ENCODE measurements at regions of chr5 and their contacts with region 1.

Region 1: DNA sequence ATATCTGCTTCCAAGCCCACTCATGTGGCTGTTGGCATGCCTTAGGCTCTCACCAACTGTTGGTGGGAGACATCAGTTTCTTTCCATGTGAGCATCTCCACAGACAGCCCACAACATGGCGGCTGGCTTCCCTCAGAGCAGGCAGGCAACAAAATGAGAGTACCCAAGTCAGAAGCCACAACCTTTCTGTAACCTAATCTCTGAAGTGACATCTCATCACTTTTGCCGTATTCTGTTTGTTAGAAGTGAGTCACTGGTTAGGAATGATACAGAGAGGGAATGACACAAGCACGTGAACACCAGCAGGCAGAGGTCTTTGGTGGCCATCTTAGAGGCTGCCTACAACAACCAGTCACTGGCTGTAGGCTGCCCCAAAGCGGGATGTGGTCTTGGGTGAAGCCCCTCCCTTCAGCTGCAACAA is 88.6 kb upstream of the RASGRF2 start:
- DNase-seq: no peak
- H3K4me3 Mint-ChIP-seq: no peak overlapping the region
- H3K27ac Mint-ChIP-seq: peak overlapping the region; percentile 89
- H3K4me1 Mint-ChIP-seq: peaks cover 24% of the 10 kb centered on the region
- H3K27me3 Mint-ChIP-seq: no peaks in the 10 kb centered on the region

Region 2: GRCh38 chr5:80884929-80885328 is 13.4 kb after region 1 on chr5:
- intact Hi-C with region 1: loop called (anchors 1 kb)
- DNase-seq: no peak
- H3K4me3 Mint-ChIP-seq: no peak overlapping the region
- H3K27ac Mint-ChIP-seq: peak overlapping the region; percentile 72
- H3K4me1 Mint-ChIP-seq: peaks cover 17% of the 10 kb centered on the region
- H3K27me3 Mint-ChIP-seq: no peaks in the 10 kb centered on the region

Region 3: GRCh38 chr5:81288021-81288433 is 416.5 kb after region 1 on chr5:
- intact Hi-C with region 1: loop called (anchors 10 kb)
- DNase-seq: no peak
- H3K4me3 Mint-ChIP-seq: no peak overlapping the region
- H3K27ac Mint-ChIP-seq: no peak overlapping the region
- H3K4me1 Mint-ChIP-seq: peaks cover 16% of the 10 kb centered on the region
- H3K27me3 Mint-ChIP-seq: no peaks in the 10 kb centered on the region

Measured in activated CD4-positive, alpha-beta T cell treated with anti-CD3 and anti-CD28 coated beads, Interleukin-2, amount 10 ng/mL, durations not matched to agents 24 days and 14 days (primary cell).